Activated B cell treated with CpG ODN at 0.5 μM for 24 hours (primary cell): ENCODE measurements at regions of chr14 and their contacts with region 1.

Region 1: DNA sequence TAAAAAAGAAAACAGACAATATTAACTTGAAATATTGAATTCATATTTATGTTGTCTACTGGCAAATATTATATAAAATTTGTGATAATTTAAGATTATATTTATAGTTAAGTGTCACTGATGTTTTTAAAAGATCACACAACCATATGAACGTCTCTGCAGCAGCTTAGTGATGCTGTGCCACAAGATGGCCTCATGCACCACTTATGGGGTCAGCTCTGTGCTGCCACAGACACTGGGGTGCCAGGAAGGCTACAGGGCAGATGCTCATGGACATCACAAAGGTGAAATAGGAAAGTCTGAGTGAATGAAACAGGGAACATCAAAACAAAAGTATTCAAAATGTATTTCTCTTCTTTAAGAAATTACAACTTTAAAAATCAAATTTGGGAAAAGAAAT is 13.1 kb downstream of the ATXN3 start:
- DNase-seq: no peak
- ATAC-seq: no peak
- H3K4me3 Mint-ChIP-seq: no peak overlapping the region
- H3K27ac Mint-ChIP-seq: no peak overlapping the region
- H3K4me1 Mint-ChIP-seq: no peaks in the 10 kb centered on the region
- H3K27me3 Mint-ChIP-seq: no peaks in the 10 kb centered on the region
- CTCF ChIP-seq: no peak

Region 2: GRCh38 chr14:92456215-92457015 is 363.1 kb after region 1 on chr14:
- CTCF ChIA-PET with region 1: no interaction called
- POLR2A ChIA-PET with region 1: no interaction called
- intact Hi-C with region 1: loop called (anchors 2 kb)
- DNase-seq: no peak
- ATAC-seq: peak; percentile 77
- H3K4me3 Mint-ChIP-seq: no peak overlapping the region
- H3K27ac Mint-ChIP-seq: no peak overlapping the region
- H3K4me1 Mint-ChIP-seq: peaks cover 6% of the 10 kb centered on the region
- H3K27me3 Mint-ChIP-seq: peaks cover 5% of the 10 kb centered on the region
- CTCF ChIP-seq: no peak